CD4-positive, alpha-beta memory T cell (primary cell): ENCODE measurements at regions of chr11 and their contacts with region 1.

Region 1: DNA sequence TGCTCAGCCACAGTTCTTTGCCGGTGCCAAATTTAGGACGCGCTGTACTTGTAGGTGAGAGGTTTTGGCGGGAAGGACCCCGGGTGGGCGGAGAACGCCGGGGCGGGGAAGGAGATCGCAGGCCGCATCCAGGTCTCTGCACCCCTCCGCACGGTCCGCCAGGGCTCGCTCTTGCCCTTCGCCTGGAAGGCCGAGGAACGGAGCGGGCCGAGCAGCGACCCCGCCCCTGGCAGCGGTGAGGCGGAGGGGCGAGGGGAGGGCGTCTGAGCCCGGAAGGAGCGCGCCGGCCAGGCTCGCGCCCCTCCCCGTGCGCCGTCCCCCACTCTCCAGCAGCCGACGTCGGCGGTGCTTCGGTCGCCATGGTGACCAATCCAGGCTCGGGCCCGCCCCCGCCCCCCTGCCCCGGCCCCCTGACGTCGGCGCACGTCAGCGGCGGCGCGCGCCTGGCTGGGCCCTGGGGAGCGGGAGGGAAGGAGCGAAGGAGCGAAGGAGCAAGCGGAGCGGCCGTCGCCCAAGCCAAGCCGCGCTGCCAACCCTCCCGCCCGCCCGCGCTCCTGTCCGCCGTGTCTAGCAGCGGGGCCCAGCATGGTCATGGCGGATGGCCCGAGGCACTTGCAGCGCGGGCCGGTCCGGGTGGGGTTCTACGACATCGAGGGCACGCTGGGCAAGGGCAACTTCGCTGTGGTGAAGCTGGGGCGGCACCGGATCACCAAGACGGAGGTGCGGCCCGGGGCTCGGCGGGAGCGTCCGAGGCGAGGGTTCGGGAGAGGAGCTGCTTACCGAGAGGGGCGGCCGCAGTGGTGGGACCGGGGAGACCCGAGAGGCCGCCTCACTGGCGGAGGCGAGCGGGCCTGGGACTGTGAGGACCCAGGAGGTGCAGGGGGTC is at the start of gene SIK2:
- DNase-seq: peak; percentile 87 to 90 (median 88)
- H3K4me3 ChIP-seq: peak within 1 kb of the TSS; percentile 66 to 75
- H3K4me3 Mint-ChIP-seq: peak within 1 kb of the TSS; percentile 90 to 99 (median 96)
- H3K27ac ChIP-seq: peak within 1 kb of the TSS; percentile 85
- H3K27ac Mint-ChIP-seq: peak within 1 kb of the TSS; percentile 91 to 99 (median 98)
- H3K4me1 ChIP-seq: peaks cover 24% of the 10 kb centered on the region
- H3K4me1 Mint-ChIP-seq: peaks cover 13 to 37% (median 19%) of the 10 kb centered on the region in 4 donors
- H3K27me3 ChIP-seq: no peaks in the 10 kb centered on the region
- H3K27me3 Mint-ChIP-seq: no peaks in the 10 kb centered on the region
- total RNA-seq, gene SIK2: 12.8 to 13.8 TPM

Region 2: GRCh38 chr11:111526501-111526900 is 75.7 kb before region 1 on chr11:
- CTCF ChIA-PET with region 1: no interaction called
- POLR2A ChIA-PET with region 1: no interaction called
- intact Hi-C with region 1: no loop called
- DNase-seq: no peak
- H3K4me3 ChIP-seq: no peak overlapping the region
- H3K4me3 Mint-ChIP-seq: no peak overlapping the region
- H3K27ac ChIP-seq: no peak overlapping the region
- H3K27ac Mint-ChIP-seq: no peak overlapping the region
- H3K4me1 ChIP-seq: peaks cover 5% of the 10 kb centered on the region
- H3K4me1 Mint-ChIP-seq: peaks cover 3 to 8% (median 5%) of the 10 kb centered on the region in 4 donors
- H3K27me3 ChIP-seq: no peaks in the 10 kb centered on the region
- H3K27me3 Mint-ChIP-seq: peaks cover 8 to 10% of the 10 kb centered on the region in 2 donors

Region 3: DNA sequence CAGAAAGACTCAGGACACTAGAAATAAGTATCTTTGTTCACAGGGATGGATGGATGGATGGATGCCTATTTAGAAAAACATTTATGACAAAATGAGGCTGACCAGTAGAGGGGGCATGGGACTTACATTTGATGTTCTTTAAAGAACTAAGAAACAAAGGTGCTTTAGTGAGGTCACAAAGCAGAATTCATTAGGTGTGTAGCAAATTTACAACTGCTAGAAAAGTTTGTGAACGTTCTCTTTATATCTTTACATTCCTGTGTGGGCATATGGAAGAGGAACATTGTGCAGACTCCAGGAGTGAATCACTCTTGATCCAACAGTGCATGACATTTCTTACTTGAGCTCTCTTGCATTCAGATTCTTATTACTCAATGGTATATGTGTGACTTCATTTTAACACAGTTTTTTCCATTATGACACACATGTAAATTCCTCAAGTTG is 15.8 kb before region 1 on chr11:
- CTCF ChIA-PET with region 1: interaction called, 15 read pairs
- POLR2A ChIA-PET with region 1: interaction called, 3 read pairs
- intact Hi-C with region 1: no loop called
- DNase-seq: peak; percentile 51 to 62 (median 59)
- H3K4me3 ChIP-seq: no peak overlapping the region
- H3K4me3 Mint-ChIP-seq: no peak overlapping the region
- H3K27ac ChIP-seq: no peak overlapping the region
- H3K27ac Mint-ChIP-seq: no peak overlapping the region
- H3K4me1 ChIP-seq: no peaks in the 10 kb centered on the region
- H3K4me1 Mint-ChIP-seq: no peaks in the 10 kb centered on the region
- H3K27me3 ChIP-seq: no peaks in the 10 kb centered on the region
- H3K27me3 Mint-ChIP-seq: peaks cover 1 to 3% of the 10 kb centered on the region in 2 donors

Region 4: DNA sequence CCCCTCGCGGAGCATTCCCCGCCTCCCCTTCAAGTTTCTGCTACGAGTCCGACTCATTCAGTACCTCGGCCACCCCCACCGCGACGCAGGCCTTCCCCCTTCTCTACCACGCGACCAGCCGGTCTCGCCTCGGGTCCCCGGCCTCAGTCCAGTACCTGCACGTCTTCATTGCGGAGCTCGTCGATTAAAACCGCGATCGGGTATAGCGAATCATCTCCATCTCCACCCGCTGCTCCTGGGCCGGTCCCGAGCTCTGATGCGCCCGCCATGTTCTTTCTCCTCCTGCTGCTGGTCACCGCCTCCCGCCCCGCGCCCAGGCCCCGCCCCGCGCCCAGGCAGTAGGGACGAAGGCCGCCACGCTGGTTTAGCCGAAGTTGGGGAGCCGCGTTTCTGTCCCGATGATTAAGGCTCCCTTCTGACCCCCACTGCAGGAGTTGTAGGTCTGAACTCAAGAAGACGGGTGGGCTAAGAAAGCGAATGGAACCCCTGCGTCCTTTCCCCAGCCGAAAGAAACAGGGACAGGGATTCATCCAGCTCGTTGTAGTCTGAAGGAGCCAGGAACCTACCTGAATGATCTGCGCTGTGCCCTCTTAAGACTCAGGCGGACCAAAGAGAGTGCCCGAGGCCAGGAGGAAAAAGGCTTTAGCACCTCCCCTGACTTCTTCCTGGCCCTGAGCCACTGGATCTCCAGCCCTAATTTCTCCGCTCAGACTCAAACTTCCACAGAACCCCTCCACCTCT is 164.0 kb after region 1 on chr11 and contains the start of gene PPP2R1B:
- CTCF ChIA-PET with region 1: interaction called, 50 read pairs
- POLR2A ChIA-PET with region 1: interaction called, 16 read pairs
- intact Hi-C with region 1: loop called (anchors 1 kb)
- DNase-seq: peak; percentile 71 to 78 (median 75)
- H3K4me3 ChIP-seq: peak within 1 kb of the TSS; percentile 64 to 92
- H3K4me3 Mint-ChIP-seq: peak within 1 kb of the TSS; percentile 93 to 100 (median 100)
- H3K27ac ChIP-seq: peak within 1 kb of the TSS; percentile 84
- H3K27ac Mint-ChIP-seq: peak within 1 kb of the TSS; percentile 65 to 100 (median 99)
- H3K4me1 ChIP-seq: peaks cover 24% of the 10 kb centered on the region
- H3K4me1 Mint-ChIP-seq: peaks cover 29 to 50% (median 36%) of the 10 kb centered on the region in 4 donors
- H3K27me3 ChIP-seq: no peaks in the 10 kb centered on the region
- H3K27me3 Mint-ChIP-seq: peaks cover 0 to 2% of the 10 kb centered on the region in 2 donors
- total RNA-seq, gene PPP2R1B: 38.9 to 39.1 TPM

Region 5: DNA sequence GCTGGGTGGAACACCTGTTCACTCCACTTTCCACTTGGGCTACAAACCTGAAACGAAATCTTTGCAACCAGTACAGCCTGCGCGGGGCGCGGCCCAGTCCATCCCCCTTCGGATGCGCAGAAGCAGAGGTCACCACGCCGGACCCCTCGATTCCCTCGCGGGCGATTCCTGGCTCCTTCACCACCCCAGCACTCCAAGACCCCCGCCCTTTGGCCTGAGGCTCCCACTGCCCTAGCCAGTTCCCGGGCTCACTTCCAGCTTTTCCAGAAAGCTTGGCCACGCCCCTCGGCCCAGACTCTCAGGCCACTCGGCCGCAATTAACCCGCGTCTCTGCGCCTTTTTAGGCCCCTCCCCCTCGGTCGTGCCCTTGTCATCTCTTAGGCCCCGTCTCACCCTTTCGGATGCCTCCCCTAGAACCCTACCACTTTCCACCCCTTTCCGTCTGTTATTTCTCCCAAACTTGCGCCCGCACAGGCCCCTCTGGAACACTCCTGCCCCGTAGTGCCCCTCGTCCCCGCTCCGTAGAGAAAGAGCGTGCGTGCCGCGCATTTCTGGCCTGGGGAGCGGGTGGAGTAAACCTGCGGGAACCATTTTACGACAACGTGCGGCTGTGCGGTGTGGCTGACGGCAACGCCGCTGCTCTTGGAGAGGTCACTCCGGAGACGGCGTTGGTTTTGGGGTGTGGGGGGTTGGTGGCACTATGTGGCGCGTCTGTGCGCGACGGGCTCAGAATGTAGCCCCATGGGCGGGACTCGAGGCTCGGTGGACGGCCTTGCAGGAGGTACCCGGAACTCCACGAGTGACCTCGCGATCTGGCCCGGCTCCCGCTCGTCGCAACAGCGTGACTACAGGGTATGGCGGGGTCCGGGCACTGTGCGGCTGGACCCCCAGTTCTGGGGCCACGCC is 422.8 kb after region 1 on chr11 and contains the start of gene DLAT:
- CTCF ChIA-PET with region 1: no interaction called
- POLR2A ChIA-PET with region 1: no interaction called
- intact Hi-C with region 1: loop called (anchors 10 kb)
- DNase-seq: peak; percentile 85 to 89 (median 86)
- H3K4me3 ChIP-seq: peak within 1 kb of the TSS; percentile 99 to 100
- H3K4me3 Mint-ChIP-seq: peak within 1 kb of the TSS; percentile 97 to 100 (median 100)
- H3K27ac ChIP-seq: peak within 1 kb of the TSS; percentile 78
- H3K27ac Mint-ChIP-seq: peak within 1 kb of the TSS; percentile 92 to 100 (median 99)
- H3K4me1 ChIP-seq: peaks cover 15% of the 10 kb centered on the region
- H3K4me1 Mint-ChIP-seq: peaks cover 13 to 41% (median 27%) of the 10 kb centered on the region in 4 donors
- H3K27me3 ChIP-seq: no peaks in the 10 kb centered on the region
- H3K27me3 Mint-ChIP-seq: no peaks in the 10 kb centered on the region
- total RNA-seq, gene DLAT: 19.4 to 21.6 TPM

Region 6: DNA sequence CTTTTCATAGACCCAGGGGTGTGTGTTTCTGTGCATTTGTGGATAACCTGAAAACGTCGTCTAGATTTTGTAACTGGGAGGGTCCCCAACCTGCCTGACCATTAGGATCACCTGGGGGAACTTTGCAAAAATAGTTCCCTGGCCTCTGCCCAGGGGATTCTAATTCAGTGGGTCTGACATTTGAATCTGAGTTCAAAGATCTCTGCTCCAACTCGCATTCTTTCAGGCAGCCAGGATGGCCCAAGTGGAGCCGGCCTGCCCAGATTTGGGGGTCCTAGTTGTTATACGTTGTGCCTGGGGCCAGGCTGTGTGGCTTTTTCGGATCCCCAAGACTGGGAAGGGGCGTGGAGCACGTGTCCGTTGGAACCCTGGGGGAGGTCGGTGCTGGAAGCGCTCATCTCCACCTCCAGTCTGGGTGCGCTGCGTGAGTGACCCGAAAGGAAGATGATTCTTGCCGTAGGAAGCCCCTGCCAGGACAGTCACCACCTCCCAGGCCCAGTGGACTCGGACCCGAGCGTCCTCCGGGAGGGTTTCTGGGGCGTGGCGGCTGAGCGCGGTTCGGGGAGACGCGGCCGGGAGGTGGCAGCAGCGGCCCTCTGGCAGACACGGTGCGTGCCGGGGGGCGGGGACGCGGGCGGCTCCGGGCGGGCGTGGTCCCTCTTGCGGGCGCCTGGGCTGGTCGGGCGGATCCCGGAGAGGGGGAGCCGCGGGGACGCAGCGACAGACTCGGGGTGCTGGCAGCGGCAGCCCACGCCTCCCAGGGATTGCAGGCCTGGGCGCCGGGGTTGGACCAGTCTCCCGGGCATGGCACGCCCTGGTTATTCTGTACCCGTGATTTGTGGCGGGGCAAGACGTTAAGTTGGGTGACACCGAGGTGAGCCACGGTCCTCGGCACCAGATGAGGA is 687.6 kb after region 1 on chr11:
- CTCF ChIA-PET with region 1: no interaction called
- POLR2A ChIA-PET with region 1: no interaction called
- intact Hi-C with region 1: loop called (anchors 5 kb)
- DNase-seq: peak; percentile 83 to 87 (median 86)
- H3K4me3 ChIP-seq: peak overlapping the region in 1 of 2 donors; percentile 35
- H3K4me3 Mint-ChIP-seq: peak overlapping the region; percentile 74 to 90 (median 86)
- H3K27ac ChIP-seq: peak overlapping the region; percentile 50
- H3K27ac Mint-ChIP-seq: peak overlapping the region; percentile 43 to 88 (median 73)
- H3K4me1 ChIP-seq: peaks cover 19% of the 10 kb centered on the region
- H3K4me1 Mint-ChIP-seq: peaks cover 11 to 34% (median 23%) of the 10 kb centered on the region in 4 donors
- H3K27me3 ChIP-seq: no peaks in the 10 kb centered on the region
- H3K27me3 Mint-ChIP-seq: no peaks in the 10 kb centered on the region